ENCODE measurements at regions of chr10 and their contacts with region 1.

Region 1: GRCh38 chr10:102225646-102226541 is at the start of gene ELOVL3:
- DNase-seq: peak; percentile 94
- H3K4me3 Mint-ChIP-seq: peak within 1 kb of the TSS; percentile 47
- H3K27ac Mint-ChIP-seq: no peak within 1 kb of the TSS
- H3K4me1 Mint-ChIP-seq: peaks cover 13% of the 10 kb centered on the region
- H3K27me3 Mint-ChIP-seq: peaks cover 40% of the 10 kb centered on the region
- total RNA-seq, gene ELOVL3: 0.21 to 0.56 TPM

Region 2: GRCh38 chr10:102245101-102245931 is 19.4 kb after region 1 on chr10 and contains the start of gene GBF1:
- CTCF ChIA-PET with region 1: interaction called, 111 read pairs
- POLR2A ChIA-PET with region 1: interaction called, 3 read pairs
- intact Hi-C with region 1: loop called (anchors 2 kb)
- DNase-seq: peak; percentile 95
- H3K4me3 Mint-ChIP-seq: peak within 1 kb of the TSS; percentile 100
- H3K27ac Mint-ChIP-seq: peak within 1 kb of the TSS; percentile 95
- H3K4me1 Mint-ChIP-seq: peaks cover 51% of the 10 kb centered on the region
- H3K27me3 Mint-ChIP-seq: peaks cover 15% of the 10 kb centered on the region
- total RNA-seq, gene GBF1: 42.2 to 44.0 TPM

Region 3: GRCh38 chr10:102300278-102300843 is 74.5 kb after region 1 on chr10:
- CTCF ChIA-PET with region 1: interaction called, 40 read pairs
- POLR2A ChIA-PET with region 1: interaction called, 3 read pairs
- intact Hi-C with region 1: no loop called
- DNase-seq: no peak
- H3K4me3 Mint-ChIP-seq: peak overlapping the region; percentile 23
- H3K27ac Mint-ChIP-seq: peak overlapping the region; percentile 86
- H3K4me1 Mint-ChIP-seq: peaks cover 32% of the 10 kb centered on the region
- H3K27me3 Mint-ChIP-seq: no peaks in the 10 kb centered on the region

Region 4: DNA sequence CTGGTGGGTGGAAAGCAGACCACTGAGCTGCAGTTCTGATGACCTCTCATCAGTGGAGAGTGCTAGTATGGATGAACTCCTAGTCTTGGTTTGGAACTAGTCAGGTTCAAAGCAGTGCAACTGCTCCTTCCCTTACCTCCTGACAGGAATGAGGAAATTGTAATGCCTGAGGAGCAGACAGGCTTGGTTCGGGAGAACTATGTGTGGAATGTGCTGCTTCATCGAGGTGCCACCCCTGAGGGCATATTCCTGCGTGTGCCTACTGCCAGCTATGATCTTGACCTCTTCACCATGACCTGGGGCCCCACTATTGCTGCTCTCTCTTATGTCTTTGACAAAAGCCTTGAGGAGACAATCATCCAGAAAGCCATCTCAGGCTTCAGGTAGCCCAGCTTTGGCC is 142.2 kb after region 1 on chr10:
- CTCF ChIA-PET with region 1: interaction called, 66 read pairs
- POLR2A ChIA-PET with region 1: no interaction called
- intact Hi-C with region 1: no loop called
- DNase-seq: no peak
- H3K4me3 Mint-ChIP-seq: no peak overlapping the region
- H3K27ac Mint-ChIP-seq: no peak overlapping the region
- H3K4me1 Mint-ChIP-seq: no peaks in the 10 kb centered on the region
- H3K27me3 Mint-ChIP-seq: no peaks in the 10 kb centered on the region

Region 5: GRCh38 chr10:102408728-102409603 is 183.1 kb after region 1 on chr10:
- CTCF ChIA-PET with region 1: interaction called, 213 read pairs
- POLR2A ChIA-PET with region 1: no interaction called
- intact Hi-C with region 1: no loop called
- DNase-seq: peak; percentile 85
- H3K4me3 Mint-ChIP-seq: peak overlapping the region; percentile 74
- H3K27ac Mint-ChIP-seq: peak overlapping the region; percentile 3
- H3K4me1 Mint-ChIP-seq: peaks cover 30% of the 10 kb centered on the region
- H3K27me3 Mint-ChIP-seq: peaks cover 22% of the 10 kb centered on the region

Region 6: DNA sequence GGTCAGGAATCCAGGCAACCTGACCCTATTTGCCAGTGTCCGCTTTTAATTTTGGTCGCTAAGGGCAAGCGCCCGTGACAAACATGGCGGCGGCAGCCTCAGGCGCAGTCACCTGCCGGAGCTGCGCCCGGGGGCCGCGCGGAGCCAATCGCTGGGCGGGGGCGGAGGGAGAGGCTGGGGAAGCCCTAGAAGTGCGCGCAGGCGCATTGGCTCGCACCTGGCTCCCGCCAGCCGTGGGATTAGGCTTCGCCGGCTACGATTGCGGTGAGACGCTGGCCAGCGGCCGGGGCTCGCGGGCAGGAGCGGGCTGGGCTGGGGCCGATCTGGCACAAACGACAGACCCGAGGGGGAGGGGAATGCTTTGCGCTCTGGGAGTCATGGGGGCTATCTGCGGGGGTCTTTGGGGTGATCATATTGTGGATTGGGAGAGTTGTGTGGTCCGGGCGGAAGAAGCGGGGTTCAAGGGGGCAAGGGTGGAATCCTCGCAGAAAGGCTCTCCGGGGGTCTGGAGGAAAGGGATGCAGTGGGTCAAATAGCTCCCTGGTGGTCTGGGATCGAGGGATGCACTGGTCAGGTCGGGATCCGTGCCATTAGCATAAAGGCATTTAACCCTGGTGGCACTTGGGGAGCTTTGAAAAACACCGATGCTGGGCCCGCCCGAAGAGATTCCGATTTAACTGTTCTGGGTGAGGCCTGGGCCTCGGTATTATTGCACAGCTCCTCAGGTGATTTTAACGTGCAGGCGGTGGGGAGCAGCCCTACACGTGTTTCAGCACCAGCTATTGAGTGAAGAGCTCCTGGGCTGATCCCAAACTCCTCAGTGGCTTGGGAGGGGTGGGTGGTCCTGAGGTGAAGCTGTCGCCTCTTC is 235.5 kb after region 1 on chr10:
- CTCF ChIA-PET with region 1: interaction called, 11 read pairs
- POLR2A ChIA-PET with region 1: no interaction called
- intact Hi-C with region 1: no loop called
- DNase-seq: peak; percentile 95
- H3K4me3 Mint-ChIP-seq: peak overlapping the region; percentile 82
- H3K27ac Mint-ChIP-seq: peak overlapping the region; percentile 47
- H3K4me1 Mint-ChIP-seq: peaks cover 23% of the 10 kb centered on the region
- H3K27me3 Mint-ChIP-seq: no peaks in the 10 kb centered on the region

Region 7: GRCh38 chr10:103007017-103007416 is 781.1 kb after region 1 on chr10:
- CTCF ChIA-PET with region 1: no interaction called
- POLR2A ChIA-PET with region 1: no interaction called
- intact Hi-C with region 1: no loop called
- DNase-seq: no peak
- H3K4me3 Mint-ChIP-seq: no peak overlapping the region
- H3K27ac Mint-ChIP-seq: no peak overlapping the region
- H3K4me1 Mint-ChIP-seq: no peaks in the 10 kb centered on the region
- H3K27me3 Mint-ChIP-seq: no peaks in the 10 kb centered on the region